Esophagus muscularis mucosa (tissue), 4 donors: ENCODE measurements at regions of chr16 and their contacts with region 1.

Region 1: GRCh38 chr16:17416461-17417311 is 54.1 kb downstream of the XYLT1 start:
- DNase-seq: no peak
- H3K4me3 ChIP-seq: peak overlapping the region in 2 of 4 donors; percentile 4 to 23
- H3K27ac ChIP-seq: peak overlapping the region; percentile 62 to 95 (median 80)
- H3K4me1 ChIP-seq: peaks cover 9 to 62% (median 57%) of the 10 kb centered on the region in 4 donors
- H3K27me3 ChIP-seq: no peaks in the 10 kb centered on the region
- CTCF ChIP-seq: peak; percentile 18 to 34 (median 32)
- EP300 ChIP-seq: no peak
- POLR2A ChIP-seq: no peak

Region 2: DNA sequence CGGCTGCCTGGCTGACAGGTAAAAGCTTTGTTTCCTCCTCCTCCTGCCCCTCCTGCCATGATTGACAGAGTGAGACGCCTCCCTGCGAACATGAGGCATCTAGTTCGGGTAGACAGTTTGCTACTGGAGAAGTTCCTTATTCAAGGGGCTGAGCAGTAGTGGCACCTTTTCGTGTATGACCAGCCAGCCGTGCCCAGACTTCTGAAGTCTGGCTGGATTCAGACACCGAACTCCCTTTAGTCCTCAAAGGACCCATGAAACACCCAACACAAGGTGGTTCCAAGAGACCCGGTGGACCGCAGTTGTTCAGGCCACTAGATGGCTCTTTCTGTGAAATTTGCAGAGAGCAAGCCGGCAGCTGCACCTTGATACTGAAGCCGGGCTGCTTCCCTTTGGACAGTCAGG is 138.7 kb before region 1 on chr16:
- intact Hi-C with region 1: loop called (anchors 5 kb)
- DNase-seq: no peak
- H3K4me3 ChIP-seq: no peak overlapping the region
- H3K27ac ChIP-seq: peak overlapping the region in 1 of 4 donors; percentile 1
- H3K4me1 ChIP-seq: peaks cover 0 to 43% (median 37%) of the 10 kb centered on the region in 4 donors
- H3K27me3 ChIP-seq: no peaks in the 10 kb centered on the region
- CTCF ChIP-seq: peak; percentile 34 to 49 (median 36)
- EP300 ChIP-seq: no peak
- POLR2A ChIP-seq: no peak